CD4-positive, alpha-beta memory T cell (primary cell): ENCODE measurements at regions of chr10 and their contacts with region 1.

Region 1: DNA sequence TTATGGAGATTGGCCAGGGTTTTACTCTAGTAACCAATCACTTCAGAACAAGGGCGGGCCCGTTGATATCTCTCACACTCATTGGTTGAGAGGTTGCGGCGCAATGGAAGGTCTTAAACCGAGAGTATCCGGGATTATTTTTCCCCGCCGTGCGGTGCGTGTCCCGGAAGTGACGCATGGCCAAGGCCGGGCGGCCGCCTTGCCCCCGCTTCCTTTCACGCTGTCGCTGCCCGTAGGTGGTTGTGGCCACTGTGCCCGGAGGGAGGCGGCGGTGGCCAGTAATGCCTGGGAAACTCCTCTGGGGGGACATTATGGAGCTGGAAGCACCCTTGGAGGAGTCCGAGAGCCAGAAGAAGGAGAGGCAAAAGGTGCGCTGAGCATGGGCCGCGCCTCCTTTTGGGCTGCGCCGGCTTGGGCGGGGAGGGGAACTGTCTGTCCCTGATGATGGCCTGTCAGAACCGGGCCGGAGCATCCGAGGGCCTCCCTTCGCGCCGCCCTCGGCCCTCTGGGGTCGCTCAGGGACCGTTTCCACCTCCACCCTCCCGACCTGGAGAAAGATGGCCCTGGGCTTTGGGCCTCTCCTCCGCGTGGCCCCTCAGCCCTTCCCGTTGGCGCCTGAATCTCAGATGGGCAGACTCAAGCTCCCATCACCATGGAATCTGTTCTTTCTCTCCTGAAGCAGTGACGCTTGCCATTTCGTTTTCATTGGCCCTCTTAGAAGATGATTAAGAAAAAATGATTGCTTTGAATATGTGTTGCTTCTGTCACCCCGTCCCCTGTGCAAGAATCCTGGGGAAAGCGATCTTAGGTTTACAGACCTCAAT is at the start of gene DDX50:
- DNase-seq: peak; percentile 94 to 98 (median 96)
- H3K4me3 ChIP-seq: peak within 1 kb of the TSS; percentile 58 to 85
- H3K4me3 Mint-ChIP-seq: peak within 1 kb of the TSS; percentile 97 to 99 (median 98)
- H3K27ac ChIP-seq: peak within 1 kb of the TSS; percentile 97
- H3K27ac Mint-ChIP-seq: peak within 1 kb of the TSS; percentile 99 to 100 (median 99)
- H3K4me1 ChIP-seq: peaks cover 37% of the 10 kb centered on the region
- H3K4me1 Mint-ChIP-seq: peaks cover 25 to 61% (median 40%) of the 10 kb centered on the region in 4 donors
- H3K27me3 ChIP-seq: no peaks in the 10 kb centered on the region
- H3K27me3 Mint-ChIP-seq: no peaks in the 10 kb centered on the region
- total RNA-seq, gene DDX50: 41.1 to 41.9 TPM

Region 2: DNA sequence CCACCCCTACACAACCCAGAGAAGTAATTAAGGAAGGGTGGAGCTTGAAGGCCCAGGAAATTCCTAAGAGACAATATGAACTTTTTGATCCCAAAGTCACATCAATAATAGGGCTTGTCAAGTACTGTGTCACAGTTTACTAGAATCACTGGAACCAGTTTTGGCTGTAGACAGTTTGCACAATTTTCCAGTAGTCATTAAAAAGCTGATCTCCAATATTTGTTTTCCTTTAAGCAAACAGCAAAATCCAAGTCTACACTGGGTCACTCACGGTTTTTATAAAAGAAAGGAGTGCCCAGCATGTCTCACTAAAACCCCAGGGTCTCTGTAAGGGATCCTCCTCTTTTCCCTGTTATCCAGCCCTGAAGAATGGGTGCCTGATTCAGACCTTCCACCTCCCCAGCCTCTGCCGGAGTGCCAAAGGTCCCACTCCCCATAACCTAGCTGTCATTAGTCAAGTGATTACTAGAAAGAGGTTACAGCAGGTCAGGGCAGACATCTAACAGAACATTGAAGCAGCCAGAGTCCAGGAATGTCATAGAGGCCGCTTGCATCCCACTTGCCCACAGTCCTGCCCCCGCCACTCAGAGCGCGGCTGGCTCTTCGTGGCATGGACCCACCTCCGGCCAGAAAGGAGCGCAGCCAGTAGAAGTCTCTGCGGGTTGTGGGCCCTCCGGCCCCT is 374.5 kb before region 1 on chr10:
- CTCF ChIA-PET with region 1: no interaction called
- POLR2A ChIA-PET with region 1: no interaction called
- intact Hi-C with region 1: loop called (anchors 10 kb)
- DNase-seq: peak in 1 of 5 donors; percentile 1
- H3K4me3 ChIP-seq: peak overlapping the region; percentile 93
- H3K4me3 Mint-ChIP-seq: peak overlapping the region; percentile 84 to 94 (median 90)
- H3K27ac ChIP-seq: peak overlapping the region; percentile 94
- H3K27ac Mint-ChIP-seq: peak overlapping the region; percentile 82 to 98 (median 97)
- H3K4me1 ChIP-seq: peaks cover 8% of the 10 kb centered on the region
- H3K4me1 Mint-ChIP-seq: peaks cover 5 to 13% (median 7%) of the 10 kb centered on the region in 4 donors
- H3K27me3 ChIP-seq: no peaks in the 10 kb centered on the region
- H3K27me3 Mint-ChIP-seq: no peaks in the 10 kb centered on the region